ENCODE measurements at regions of chr16 and their contacts with region 1.

Region 1: DNA sequence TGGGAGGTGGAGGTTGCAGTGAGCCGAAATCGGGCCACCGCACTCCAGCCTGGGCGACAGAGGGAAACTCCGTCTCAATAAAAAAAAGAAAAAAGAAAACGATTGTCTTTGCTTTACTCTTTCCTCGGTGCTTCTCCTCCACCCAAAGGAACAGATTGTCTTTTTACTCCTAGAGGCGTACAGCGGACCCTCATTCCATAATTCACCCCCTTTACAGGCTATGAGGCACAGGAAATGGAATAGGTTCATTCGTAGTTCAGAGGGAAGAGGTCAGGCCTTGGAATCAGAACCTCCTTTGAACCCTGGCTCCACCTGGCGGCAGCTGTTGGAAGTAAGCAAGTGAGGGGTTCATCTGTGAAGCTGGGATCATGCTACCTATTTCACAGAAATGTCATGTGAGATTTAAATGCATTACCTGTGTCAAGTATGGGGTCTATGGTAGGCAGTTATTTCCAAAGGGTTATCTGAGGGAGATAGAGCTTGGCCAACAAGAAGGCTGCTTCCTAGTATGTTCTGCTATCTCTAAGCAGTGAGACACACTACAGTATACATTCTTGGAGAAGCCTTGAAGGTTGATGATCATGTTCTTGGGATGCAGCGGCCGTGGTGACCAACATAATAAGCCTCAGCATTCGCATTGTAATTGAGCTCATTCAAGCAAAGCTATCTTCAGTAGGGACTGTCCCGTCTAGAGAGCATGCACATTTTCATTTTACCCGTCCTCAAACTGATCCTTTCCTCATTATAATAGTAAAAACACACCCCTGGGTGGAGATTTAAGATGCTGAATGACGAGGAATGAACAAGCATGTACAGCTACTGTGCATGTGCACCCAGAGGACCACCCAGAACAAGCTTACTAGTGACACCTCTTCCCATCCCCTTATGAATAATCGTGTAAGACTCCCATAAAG is 18.7 kb upstream of the ZNF689 start:
- DNase-seq: peak; percentile 84

Region 2: DNA sequence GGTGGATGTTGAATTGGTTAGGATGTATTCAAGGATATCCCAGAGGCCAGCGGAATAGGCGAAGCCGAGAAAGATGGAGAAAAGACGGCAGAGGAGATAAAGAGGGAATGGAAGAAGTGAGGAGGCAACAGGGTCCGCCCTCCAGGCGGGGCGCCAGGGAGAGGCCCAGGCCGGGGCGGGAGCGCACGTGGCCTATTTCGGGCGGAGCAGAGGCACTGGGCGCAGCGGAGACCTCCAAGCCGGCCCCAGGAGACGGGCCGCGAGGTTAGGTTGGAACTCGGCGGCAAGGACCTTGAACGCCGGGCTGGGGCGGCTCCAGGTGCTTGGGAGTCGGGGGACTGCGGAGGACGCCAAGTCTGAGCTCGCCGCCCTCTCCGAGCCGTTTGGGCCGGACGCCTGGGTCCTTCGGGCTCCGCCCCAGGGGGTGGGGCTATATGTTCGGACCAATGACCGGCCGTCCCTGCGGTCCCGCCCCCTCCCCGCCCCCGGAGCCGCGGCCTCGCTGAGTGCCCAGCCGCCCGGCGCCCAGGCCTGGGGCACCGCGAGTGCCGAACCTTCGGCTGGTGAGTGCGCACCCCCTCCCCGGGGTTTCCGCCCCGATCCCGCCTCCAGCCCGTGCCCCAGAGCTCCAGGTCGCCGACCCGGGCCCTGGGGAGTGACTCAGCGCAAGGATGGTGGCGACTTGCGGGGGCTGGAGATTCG is 221.6 kb before region 1 on chr16 and contains the start of gene ZNF771:
- in situ Hi-C with region 1: loop called (anchors 25 kb)
- DNase-seq: peak; percentile 93
- total RNA-seq, gene ZNF771: 31.6 and 41.2 TPM in 2 replicates

Region 3: DNA sequence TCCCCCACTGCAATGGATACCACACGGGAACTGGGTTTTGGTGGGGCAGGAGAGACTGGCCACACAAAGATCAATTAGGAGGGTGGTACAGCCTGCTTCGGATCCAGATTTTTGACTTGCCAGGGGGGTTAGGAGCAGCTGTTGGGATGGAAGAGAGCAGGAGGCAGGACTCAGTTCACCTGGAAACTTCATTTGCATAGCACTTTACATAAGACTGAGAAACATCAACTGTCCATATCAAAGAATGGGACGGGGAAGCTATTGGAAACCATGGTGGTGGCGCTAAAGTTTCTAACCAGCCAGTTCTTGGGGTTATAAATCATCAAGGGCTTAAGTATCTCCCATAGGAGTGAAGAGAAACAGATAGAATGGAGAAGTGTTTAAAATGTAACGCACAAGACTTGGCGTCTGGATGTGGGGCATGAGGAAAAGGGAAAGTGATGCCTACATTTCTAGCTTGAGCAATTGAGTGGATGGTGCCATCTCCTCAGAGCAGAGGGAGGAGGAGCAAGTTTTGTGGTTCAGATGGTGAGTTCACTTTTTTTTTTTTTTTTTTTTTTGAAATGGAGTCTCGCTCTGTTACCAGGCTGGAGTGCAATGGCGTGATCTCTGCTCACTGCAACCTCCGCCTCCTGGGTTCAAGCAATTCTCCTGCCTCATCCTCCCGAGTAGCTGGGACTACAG is 63.6 kb after region 1 on chr16:
- in situ Hi-C with region 1: loop called (anchors 5 kb)
- DNase-seq: no peak

Measured in G401 (cell line).